HepG2 (cell line): ENCODE measurements at regions of chr9 and their contacts with region 1.

Region 1: DNA sequence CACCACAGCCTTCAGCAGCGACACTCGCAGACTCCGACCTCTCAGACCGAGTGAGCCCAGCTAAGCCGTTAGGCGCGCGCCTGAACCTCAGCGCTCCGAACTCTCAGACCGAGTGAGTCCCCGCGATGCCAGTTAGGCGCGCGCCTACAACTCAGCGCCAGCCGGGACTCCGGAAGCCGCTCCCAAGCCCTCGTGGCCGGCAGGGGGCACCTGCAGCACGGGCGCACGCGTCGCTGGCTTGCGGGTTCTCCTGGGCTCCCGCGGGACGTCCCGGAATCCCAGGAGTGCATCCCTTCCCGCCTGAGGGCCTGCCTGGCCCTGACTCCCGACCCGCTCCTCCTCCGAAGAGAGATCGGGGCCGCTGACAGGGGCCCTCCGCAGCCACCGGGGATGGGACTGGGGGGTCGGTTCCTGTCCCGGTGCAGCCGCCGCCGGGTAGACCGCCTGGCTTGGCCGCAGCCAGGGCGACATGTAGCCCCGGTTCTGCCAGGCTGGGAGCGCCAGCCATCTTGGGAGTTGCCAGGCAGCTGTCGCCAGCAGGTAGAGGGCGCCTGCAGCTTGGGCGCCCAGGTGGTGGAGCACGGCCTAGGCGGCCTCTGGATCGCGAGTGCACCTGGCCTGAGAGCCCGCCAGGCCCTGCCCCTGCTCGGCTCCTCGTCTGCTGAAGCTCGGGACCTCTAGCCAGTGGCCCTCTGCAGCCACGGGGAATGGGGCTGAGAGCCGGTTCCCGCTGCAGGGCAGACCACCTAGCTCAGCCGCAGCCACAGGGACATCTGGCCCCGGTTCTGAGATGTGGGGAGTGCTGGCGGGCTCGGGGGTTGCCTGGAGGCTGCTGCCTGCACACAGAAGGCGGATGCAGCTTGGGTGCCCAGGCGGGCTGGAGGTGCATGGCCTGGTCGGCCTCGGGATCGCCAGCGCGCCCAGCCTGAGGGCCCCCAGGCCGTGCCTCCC is at the start of gene ANKRD18A:
- DNase-seq: peak; percentile 89
- ATAC-seq: peak; percentile 91
- H3K4me3 ChIP-seq: peak within 1 kb of the TSS; percentile 68 to 79 (median 70)
- H3K27ac ChIP-seq: peak within 1 kb of the TSS; percentile 77
- H3K4me1 ChIP-seq: no peaks in the 10 kb centered on the region
- H3K27me3 ChIP-seq: no peaks in the 10 kb centered on the region
- CTCF ChIP-seq: peak; percentile 88
- EP300 ChIP-seq: no peak
- POLR2A ChIP-seq: peak; percentile 67 to 85
- RAD21 ChIP-seq: peak; percentile 91
- total RNA-seq, gene ANKRD18A: 4.3 and 5.9 TPM in 2 replicates

Region 2: DNA sequence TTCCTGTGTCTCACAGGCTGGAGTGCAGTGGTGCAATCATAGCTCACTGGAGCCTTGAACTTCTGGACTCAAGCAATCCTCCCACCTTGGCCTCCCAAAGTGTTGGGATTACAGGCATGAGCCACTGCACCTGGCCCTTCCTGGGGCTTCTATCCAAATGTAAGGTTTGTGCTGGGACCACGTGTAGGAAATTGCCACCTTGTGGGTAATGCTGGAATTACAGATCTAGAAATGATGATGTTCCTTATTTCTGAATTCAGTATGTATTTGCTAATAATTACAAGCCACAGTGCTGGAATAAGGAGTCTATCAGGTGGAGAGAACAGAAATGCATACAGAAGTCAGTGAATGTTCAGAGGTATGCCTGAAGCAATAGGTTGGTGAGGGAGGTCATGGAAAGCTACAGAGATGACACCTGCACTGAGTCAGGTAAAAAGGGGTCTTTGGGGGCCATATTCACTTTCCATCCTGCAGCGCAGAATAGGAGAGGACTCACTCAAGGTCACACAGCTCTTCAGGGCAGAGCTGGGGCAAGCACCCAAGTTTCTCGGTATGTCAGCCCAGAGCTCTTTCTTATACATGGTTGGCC is 187.7 kb before region 1 on chr9:
- CTCF ChIA-PET with region 1: no interaction called
- POLR2A ChIA-PET with region 1: interaction called, 3 read pairs
- in situ Hi-C with region 1: no loop called
- intact Hi-C with region 1: loop called (anchors 5 kb)
- DNase-seq: peak; percentile 43
- ATAC-seq: peak; percentile 14; the same call in 1 of the 3 replicates
- H3K4me3 ChIP-seq: no peak overlapping the region
- H3K27ac ChIP-seq: no peak overlapping the region
- H3K4me1 ChIP-seq: peaks cover 58% of the 10 kb centered on the region
- H3K27me3 ChIP-seq: peaks cover 0 to 9% of the 10 kb centered on the region in 2 experiments; a peak in 2 of 5 replicates
- CTCF ChIP-seq: peak; percentile 63
- EP300 ChIP-seq: no peak
- POLR2A ChIP-seq: no peak
- RAD21 ChIP-seq: 0 out of 2 replicates have a peak, but pooled peaks have one; percentile 19

Region 3: GRCh38 chr9:38641985-38642864 is 21.5 kb after region 1 on chr9:
- CTCF ChIA-PET with region 1: interaction called, 11 read pairs
- POLR2A ChIA-PET with region 1: interaction called, 3 read pairs
- in situ Hi-C with region 1: no loop called
- intact Hi-C with region 1: no loop called
- DNase-seq: peak; percentile 17
- ATAC-seq: peak; percentile 88
- H3K4me3 ChIP-seq: no peak overlapping the region
- H3K27ac ChIP-seq: no peak overlapping the region
- H3K4me1 ChIP-seq: no peaks in the 10 kb centered on the region
- H3K27me3 ChIP-seq: peaks cover 0 to 36% of the 10 kb centered on the region in 2 experiments; a peak in 3 of 5 replicates
- CTCF ChIP-seq: peak; percentile 49
- EP300 ChIP-seq: no peak
- POLR2A ChIP-seq: no peak
- RAD21 ChIP-seq: no peak